ENCODE measurements at regions of chr7 and their contacts with region 1.

Region 1: DNA sequence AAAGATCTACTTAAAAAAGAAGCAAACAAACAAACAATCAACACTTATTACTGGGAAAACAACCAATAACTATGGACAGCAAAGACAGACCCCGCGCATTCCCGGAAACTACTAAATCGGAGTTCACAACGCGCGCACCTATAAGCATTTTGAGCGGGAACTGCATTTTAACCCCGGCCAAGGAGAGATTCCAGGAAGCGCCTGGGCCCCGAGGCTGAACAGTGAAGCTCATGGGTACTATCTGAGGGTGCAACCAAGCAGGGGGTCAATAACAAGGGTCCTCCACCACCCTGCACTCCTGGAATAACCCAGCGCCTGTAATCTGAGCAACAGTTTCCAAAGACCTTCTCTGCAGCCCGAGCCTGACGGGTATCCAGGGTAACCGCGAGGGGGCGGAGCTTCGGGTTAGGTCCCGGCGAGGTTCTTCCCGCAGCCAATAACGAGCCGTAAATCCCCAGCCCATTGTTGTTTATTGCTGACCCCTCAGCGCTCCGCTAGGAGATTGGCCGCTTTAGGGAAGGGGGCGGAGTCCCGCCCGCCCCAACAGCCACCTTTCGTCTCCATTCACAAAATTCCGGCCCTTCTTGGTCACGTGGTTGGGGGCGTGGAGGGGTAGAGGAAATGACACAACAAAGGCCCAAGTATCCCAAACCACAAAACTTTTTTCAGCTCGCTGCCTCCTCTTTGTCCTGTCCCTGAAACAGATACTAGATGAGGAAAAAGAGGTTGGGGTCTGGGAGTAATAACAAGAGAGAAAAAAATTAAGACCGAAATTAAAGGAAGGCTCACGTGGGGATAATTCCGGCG is 1.7 kb upstream of the ETV1 start:
- DNase-seq: peak; percentile 89 to 99
- H3K4me3 ChIP-seq: peak overlapping the region; percentile 79 to 94
- H3K27ac ChIP-seq: peak overlapping the region; percentile 91 to 93
- H3K4me1 ChIP-seq: peaks cover 0 to 6% of the 10 kb centered on the region in 2 donors
- H3K27me3 ChIP-seq: no peaks in the 10 kb centered on the region
- CTCF ChIP-seq: no peak

Region 2: GRCh38 chr7:13540429-13540828 is 450.8 kb before region 1 on chr7:
- intact Hi-C with region 1: no loop called
- DNase-seq: no peak
- H3K4me3 ChIP-seq: no peak overlapping the region
- H3K27ac ChIP-seq: no peak overlapping the region
- H3K4me1 ChIP-seq: no peaks in the 10 kb centered on the region
- H3K27me3 ChIP-seq: no peaks in the 10 kb centered on the region
- CTCF ChIP-seq: no peak

Region 3: GRCh38 chr7:13920053-13920697 is 71.0 kb before region 1 on chr7:
- intact Hi-C with region 1: loop called (anchors 5 kb)
- DNase-seq: peak in 1 of 2 donors; percentile 68
- H3K4me3 ChIP-seq: no peak overlapping the region
- H3K27ac ChIP-seq: peak overlapping the region; percentile 48 to 54
- H3K4me1 ChIP-seq: no peaks in the 10 kb centered on the region
- H3K27me3 ChIP-seq: no peaks in the 10 kb centered on the region
- CTCF ChIP-seq: no peak

Measured in ascending aorta (tissue), 2 donors.